ENCODE measurements at regions of chr10 and their contacts with region 1.

Region 1: GRCh38 chr10:13160934-13161856 is at the start of gene MCM10:
- DNase-seq: peak; percentile 98
- H3K4me3 Mint-ChIP-seq: peak within 1 kb of the TSS; percentile 93
- H3K27ac Mint-ChIP-seq: peak within 1 kb of the TSS; percentile 94
- H3K4me1 Mint-ChIP-seq: peaks cover 57% of the 10 kb centered on the region
- H3K27me3 Mint-ChIP-seq: no peaks in the 10 kb centered on the region
- total RNA-seq, gene MCM10: 104 and 106 TPM in 2 replicates

Region 2: DNA sequence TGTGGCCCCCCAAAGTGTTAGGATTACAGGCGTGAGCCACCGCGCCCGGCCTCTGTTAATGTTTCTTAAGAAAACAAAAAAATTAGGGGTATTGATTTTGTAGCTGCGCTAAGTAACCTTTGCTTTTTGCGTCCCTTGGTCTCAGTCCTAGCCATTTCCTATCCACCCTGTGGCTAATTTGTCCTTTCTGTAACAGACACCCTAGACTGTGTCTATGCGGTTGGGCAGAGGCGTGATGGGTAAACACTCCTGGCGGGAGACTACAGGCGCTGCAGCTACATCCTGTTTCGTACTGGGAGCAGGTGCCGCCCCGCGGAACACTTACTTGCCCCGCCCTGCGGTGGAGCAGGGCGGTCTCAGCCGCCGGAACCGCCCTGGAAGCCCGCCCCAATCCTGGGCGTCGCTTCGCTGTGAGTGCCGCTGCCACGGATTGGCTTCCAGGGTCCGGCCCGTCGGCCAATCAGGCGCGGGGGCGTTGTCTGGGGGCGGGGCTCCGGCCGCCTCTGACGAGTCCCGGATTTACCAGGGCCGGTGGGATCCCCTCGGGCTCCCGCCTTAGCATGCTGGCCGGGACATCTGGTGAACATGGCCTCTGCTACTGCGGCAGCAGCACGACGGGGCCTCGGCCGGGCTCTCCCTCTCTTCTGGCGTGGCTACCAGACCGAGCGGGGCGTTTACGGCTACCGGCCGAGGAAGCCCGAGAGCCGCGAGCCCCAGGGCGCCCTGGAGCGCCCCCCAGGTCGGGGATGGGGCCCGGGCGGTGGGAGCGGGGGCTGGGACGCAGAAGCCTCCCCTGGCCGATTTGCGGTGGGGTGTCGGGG is 1092.5 kb before region 1 on chr10 and contains the start of gene DHTKD1:
- intact Hi-C with region 1: loop called (anchors 2 kb)
- DNase-seq: peak; percentile 100
- H3K4me3 Mint-ChIP-seq: peak within 1 kb of the TSS; percentile 83
- H3K27ac Mint-ChIP-seq: peak within 1 kb of the TSS; percentile 83
- H3K4me1 Mint-ChIP-seq: peaks cover 27% of the 10 kb centered on the region
- H3K27me3 Mint-ChIP-seq: no peaks in the 10 kb centered on the region
- total RNA-seq, gene DHTKD1: 19.9 and 22.6 TPM in 2 replicates

Region 3: GRCh38 chr10:13099666-13100348 is 61.4 kb before region 1 on chr10 and contains the start of gene OPTN:
- intact Hi-C with region 1: loop called (anchors 1 kb)
- DNase-seq: peak; percentile 73
- H3K4me3 Mint-ChIP-seq: peak within 1 kb of the TSS; percentile 93
- H3K27ac Mint-ChIP-seq: peak within 1 kb of the TSS; percentile 92
- H3K4me1 Mint-ChIP-seq: peaks cover 55% of the 10 kb centered on the region
- H3K27me3 Mint-ChIP-seq: no peaks in the 10 kb centered on the region
- total RNA-seq, gene OPTN: 52.6 and 54.1 TPM in 2 replicates

Region 4: DNA sequence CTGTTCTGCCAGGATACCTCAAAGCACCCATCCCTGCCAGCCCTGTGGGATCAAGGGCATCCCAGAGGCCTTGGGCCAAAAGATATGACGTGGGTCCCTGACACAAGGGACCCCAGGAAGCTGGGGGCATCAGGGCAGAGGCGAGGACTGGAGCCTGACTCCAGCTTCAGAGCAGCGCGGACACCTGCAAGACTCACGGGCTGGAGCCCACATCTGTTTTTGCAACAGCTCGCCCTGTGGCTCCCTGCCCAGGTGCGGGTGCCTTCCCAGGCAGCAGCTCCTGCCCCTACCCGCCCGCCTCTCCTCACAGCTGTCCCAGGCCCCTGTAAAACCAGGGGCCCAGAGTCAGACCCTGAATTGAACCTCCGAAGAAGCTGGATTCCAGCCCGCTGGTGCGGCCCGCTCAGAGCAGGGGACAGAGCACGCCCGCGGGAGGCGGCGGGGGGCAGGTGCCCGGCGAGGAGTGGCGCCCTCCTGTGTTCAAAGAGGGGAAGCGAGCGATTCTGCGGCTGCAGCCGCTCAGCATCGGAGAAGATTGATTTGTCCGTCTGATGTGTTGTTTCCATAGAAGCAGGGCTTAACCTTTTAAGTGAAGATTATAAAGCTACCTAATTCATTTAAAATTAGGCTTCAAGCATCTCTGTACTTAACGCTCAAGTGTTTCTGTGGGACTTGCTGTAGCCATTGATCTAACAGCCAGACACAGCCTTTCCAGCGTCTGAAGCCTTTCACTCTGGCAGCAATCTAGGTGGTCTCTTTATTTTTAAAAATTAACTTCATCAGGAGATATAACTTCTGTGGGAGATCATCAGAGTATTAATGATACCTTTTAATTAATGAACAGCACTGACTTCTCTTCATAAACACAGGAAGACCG is 279.2 kb after region 1 on chr10:
- intact Hi-C with region 1: loop called (anchors 2 kb)
- DNase-seq: peak; percentile 43
- H3K4me3 Mint-ChIP-seq: peak overlapping the region; percentile 58
- H3K27ac Mint-ChIP-seq: no peak overlapping the region
- H3K4me1 Mint-ChIP-seq: peaks cover 8% of the 10 kb centered on the region
- H3K27me3 Mint-ChIP-seq: peaks cover 30% of the 10 kb centered on the region

Measured in activated T-helper 1 cell treated with anti-CD3 and anti-CD28 coated beads, Interleukin-12 subunit alpha, Interleukin-12 subunit beta, Interleukin-2, Interleukin-4 antibody, amounts not matched to agents 30 ng/mL and 10 ng/mL and 1 ng/mL, durations not matched to agents 14 hours and 24 hours and 36 hours (primary cell).